Activated B cell treated with CpG ODN at 0.5 μM for 24 hours (primary cell): ENCODE measurements at regions of chr11 and their contacts with region 1.

Region 1: GRCh38 chr11:1309498-1310317 is at the start of gene TOLLIP:
- DNase-seq: peak; percentile 100
- ATAC-seq: peak; percentile 68
- H3K4me3 Mint-ChIP-seq: peak within 1 kb of the TSS; percentile 87
- H3K27ac Mint-ChIP-seq: peak within 1 kb of the TSS; percentile 99
- H3K4me1 Mint-ChIP-seq: peaks cover 53% of the 10 kb centered on the region
- H3K27me3 Mint-ChIP-seq: no peaks in the 10 kb centered on the region
- CTCF ChIP-seq: no peak
- total RNA-seq, gene TOLLIP: 40.5 and 46.4 TPM in 2 replicates

Region 2: DNA sequence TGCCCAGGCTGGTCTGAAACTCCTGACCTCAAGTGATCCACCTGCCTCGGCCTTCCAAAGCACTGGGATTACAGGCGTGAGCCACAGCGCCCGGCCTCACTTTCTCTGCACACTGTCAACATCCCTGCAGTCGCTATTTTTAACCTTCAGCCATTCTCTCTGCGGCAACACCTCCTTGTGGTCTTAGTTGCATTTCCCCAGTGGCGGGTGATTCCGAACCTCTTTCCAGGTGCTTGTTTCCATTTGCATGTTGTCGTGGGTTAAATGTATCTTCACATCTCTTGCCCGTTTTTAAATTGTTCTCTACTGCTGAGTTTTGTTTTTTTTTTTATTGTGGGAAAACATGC is 680.5 kb before region 1 on chr11:
- CTCF ChIA-PET with region 1: no interaction called
- POLR2A ChIA-PET with region 1: no interaction called
- intact Hi-C with region 1: no loop called
- DNase-seq: peak; percentile 13
- ATAC-seq: no peak
- H3K4me3 Mint-ChIP-seq: no peak overlapping the region
- H3K27ac Mint-ChIP-seq: no peak overlapping the region
- H3K4me1 Mint-ChIP-seq: peaks cover 14% of the 10 kb centered on the region
- H3K27me3 Mint-ChIP-seq: peaks cover 22% of the 10 kb centered on the region
- CTCF ChIP-seq: no peak

Region 3: DNA sequence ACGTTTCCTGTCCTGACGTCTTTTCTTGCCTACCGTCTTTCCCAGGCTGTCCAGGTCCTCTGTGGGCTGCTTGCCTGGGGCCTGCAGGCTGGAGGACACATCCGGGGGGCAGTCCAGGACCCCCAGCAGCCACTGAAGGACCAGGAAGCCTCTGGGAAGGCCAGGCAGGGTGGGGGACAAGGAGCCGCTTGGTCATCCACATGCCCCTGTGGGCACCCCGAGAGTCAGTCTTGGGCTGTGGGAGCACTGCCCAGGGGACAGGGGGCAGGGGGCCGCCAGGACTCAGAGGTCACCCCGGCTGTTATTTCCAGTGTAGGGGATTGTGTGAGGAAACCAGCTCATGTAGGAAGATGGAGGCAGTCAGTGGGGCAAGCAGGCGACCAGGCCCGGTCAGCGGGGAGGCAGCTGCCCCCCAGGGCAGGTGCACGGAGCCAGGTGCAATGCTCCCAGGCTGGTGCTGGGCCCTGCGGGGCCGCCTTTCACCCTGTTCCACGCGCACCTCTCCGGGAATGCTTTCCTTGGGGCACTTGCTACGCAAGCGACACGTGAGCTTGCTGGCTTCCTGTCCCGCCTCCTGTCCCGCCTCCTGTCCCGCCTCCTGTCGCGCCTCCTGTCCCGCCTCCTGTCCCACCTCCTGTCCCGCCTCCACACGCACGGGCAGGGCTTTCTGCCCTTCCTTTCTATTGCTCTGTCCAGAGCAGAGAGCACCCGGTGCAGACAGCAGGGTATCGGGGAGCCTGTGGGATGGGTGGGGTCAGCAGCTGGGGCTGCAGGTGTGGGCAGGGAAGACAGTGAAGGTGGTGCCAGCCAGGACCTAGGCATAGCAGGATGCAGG is 47.3 kb before region 1 on chr11:
- CTCF ChIA-PET with region 1: no interaction called
- POLR2A ChIA-PET with region 1: interaction called, 11 read pairs
- intact Hi-C with region 1: loop called (anchors 1 kb)
- DNase-seq: peak; percentile 74
- ATAC-seq: peak; percentile 90
- H3K4me3 Mint-ChIP-seq: peak overlapping the region; percentile 79
- H3K27ac Mint-ChIP-seq: peak overlapping the region; percentile 83
- H3K4me1 Mint-ChIP-seq: peaks cover 15% of the 10 kb centered on the region
- H3K27me3 Mint-ChIP-seq: no peaks in the 10 kb centered on the region
- CTCF ChIP-seq: no peak

Region 4: GRCh38 chr11:1299621-1300020 is 10.1 kb before region 1 on chr11:
- CTCF ChIA-PET with region 1: no interaction called
- POLR2A ChIA-PET with region 1: no interaction called
- intact Hi-C with region 1: no loop called
- DNase-seq: peak; percentile 7
- ATAC-seq: no peak
- H3K4me3 Mint-ChIP-seq: no peak overlapping the region
- H3K27ac Mint-ChIP-seq: no peak overlapping the region
- H3K4me1 Mint-ChIP-seq: peaks cover 11% of the 10 kb centered on the region
- H3K27me3 Mint-ChIP-seq: no peaks in the 10 kb centered on the region
- CTCF ChIP-seq: no peak

Region 5: GRCh38 chr11:1335811-1336761 is 26.4 kb after region 1 on chr11:
- CTCF ChIA-PET with region 1: no interaction called
- POLR2A ChIA-PET with region 1: interaction called, 17 read pairs
- intact Hi-C with region 1: loop called (anchors 1 kb)
- DNase-seq: peak; percentile 41
- ATAC-seq: peak; percentile 60
- H3K4me3 Mint-ChIP-seq: peak overlapping the region; percentile 82
- H3K27ac Mint-ChIP-seq: peak overlapping the region; percentile 57
- H3K4me1 Mint-ChIP-seq: peaks cover 18% of the 10 kb centered on the region
- H3K27me3 Mint-ChIP-seq: no peaks in the 10 kb centered on the region
- CTCF ChIP-seq: no peak

Region 6: DNA sequence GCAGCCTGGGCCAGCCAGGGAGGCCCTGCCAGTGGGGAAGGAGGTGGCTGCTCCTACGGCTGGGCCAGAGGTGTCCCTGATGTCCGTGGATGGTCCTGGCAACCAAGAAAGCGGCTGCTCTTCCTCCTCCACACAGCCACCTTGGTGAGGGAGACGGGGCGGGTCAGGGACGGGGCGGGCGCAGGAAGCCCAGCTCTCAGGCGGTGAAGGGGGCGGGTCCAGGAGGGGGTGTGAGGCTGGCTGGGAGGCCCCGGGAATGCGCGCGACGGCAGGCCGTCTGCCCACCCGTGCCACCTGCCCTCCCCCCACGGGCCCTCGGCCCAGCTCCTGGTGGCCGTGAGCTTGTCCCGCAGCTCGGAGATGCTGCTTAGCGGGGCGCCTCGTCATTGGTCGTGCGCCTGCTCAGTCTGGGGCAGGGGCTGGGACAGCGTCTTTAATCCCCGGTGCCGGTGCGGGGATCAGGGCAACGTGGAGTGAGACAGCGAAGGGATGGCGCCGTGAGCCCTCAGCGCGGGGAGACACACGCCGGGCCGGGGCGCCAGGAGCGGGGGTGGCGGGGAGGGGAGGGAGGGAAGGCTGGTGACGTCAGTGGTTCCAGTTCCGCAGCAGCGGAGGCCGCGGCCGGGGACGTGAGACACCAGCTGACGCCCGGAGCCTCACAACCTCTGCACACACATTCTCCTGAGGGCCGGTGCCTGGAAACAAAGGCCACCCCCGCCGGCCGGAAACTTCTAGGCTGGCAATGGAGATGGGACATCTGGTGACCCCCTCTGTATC is 73.3 kb after region 1 on chr11:
- CTCF ChIA-PET with region 1: no interaction called
- POLR2A ChIA-PET with region 1: interaction called, 29 read pairs
- intact Hi-C with region 1: loop called (anchors 1 kb)
- DNase-seq: peak; percentile 68
- ATAC-seq: peak; percentile 74
- H3K4me3 Mint-ChIP-seq: peak overlapping the region; percentile 85
- H3K27ac Mint-ChIP-seq: peak overlapping the region; percentile 91
- H3K4me1 Mint-ChIP-seq: peaks cover 31% of the 10 kb centered on the region
- H3K27me3 Mint-ChIP-seq: peaks cover 1% of the 10 kb centered on the region
- CTCF ChIP-seq: no peak

Region 7: GRCh38 chr11:1389103-1389931 is 79.6 kb after region 1 on chr11:
- CTCF ChIA-PET with region 1: interaction called, 3 read pairs
- POLR2A ChIA-PET with region 1: interaction called, 29 read pairs
- intact Hi-C with region 1: loop called (anchors 1 kb)
- DNase-seq: peak; percentile 94
- ATAC-seq: peak; percentile 95
- H3K4me3 Mint-ChIP-seq: peak overlapping the region; percentile 74
- H3K27ac Mint-ChIP-seq: no peak overlapping the region
- H3K4me1 Mint-ChIP-seq: peaks cover 33% of the 10 kb centered on the region
- H3K27me3 Mint-ChIP-seq: peaks cover 26% of the 10 kb centered on the region
- CTCF ChIP-seq: no peak

Region 8: DNA sequence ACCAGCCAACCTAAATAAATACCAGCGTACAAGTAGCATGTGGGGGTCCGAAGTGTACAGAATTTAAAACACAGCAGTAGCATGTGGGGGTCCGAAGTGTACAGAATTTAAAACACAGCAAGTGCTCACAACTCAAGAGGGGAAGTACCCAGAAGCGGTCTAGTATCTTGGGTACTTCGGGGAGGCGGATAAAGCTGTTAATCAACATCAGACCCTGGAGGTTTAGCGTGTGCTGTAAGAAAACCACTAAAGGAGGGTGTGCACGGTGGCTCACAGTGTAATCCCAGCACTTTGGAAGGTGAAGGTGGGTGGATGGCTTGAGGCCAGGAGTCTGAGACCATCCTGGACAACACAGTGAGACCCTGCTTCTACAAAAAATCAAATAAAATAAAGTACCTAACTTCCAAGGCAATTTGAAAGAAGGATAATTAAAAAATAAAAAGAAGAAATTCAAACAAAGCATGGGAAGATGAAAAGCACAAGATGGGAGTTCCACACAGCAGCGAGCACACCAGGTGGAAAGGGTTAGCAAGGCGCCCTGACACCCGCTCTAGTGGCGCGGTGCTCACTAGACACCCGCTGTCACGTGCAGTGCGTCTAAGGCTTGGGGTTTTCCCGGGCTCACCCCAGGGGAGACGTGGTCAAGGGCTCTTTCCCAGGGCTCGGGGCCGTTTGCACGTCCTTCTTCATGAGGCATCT is 211.8 kb after region 1 on chr11:
- CTCF ChIA-PET with region 1: no interaction called
- POLR2A ChIA-PET with region 1: no interaction called
- intact Hi-C with region 1: loop called (anchors 5 kb)
- DNase-seq: peak; percentile 79
- ATAC-seq: peak; percentile 94
- H3K4me3 Mint-ChIP-seq: peak overlapping the region; percentile 76
- H3K27ac Mint-ChIP-seq: peak overlapping the region; percentile 74
- H3K4me1 Mint-ChIP-seq: peaks cover 68% of the 10 kb centered on the region
- H3K27me3 Mint-ChIP-seq: no peaks in the 10 kb centered on the region
- CTCF ChIP-seq: no peak

Region 9: GRCh38 chr11:3057069-3057963 is 1747.6 kb after region 1 on chr11 and contains the start of gene CARS1:
- CTCF ChIA-PET with region 1: no interaction called
- POLR2A ChIA-PET with region 1: no interaction called
- intact Hi-C with region 1: loop called (anchors 5 kb)
- DNase-seq: peak; percentile 88
- ATAC-seq: peak; percentile 89
- H3K4me3 Mint-ChIP-seq: peak within 1 kb of the TSS; percentile 90
- H3K27ac Mint-ChIP-seq: peak within 1 kb of the TSS; percentile 85
- H3K4me1 Mint-ChIP-seq: peaks cover 36% of the 10 kb centered on the region
- H3K27me3 Mint-ChIP-seq: no peaks in the 10 kb centered on the region
- CTCF ChIP-seq: no peak
- total RNA-seq, gene CARS1: 95.9 and 110 TPM in 2 replicates